ENCODE measurements at regions of chr16 and their contacts with region 1.

Region 1: GRCh38 chr16:74226338-74226954 is 70.2 kb upstream of the PSMD7 start:
- DNase-seq: no peak
- H3K4me3 ChIP-seq: peak overlapping the region in 1 of 4 experiments; percentile 4; a peak in 1 of 8 replicates
- H3K27ac ChIP-seq: no peak overlapping the region
- H3K4me1 ChIP-seq: peaks cover 0 to 4% (median under 1%) of the 10 kb centered on the region in 4 experiments; a peak in 3 of 7 replicates
- H3K27me3 ChIP-seq: no peaks in the 10 kb centered on the region
- CTCF ChIP-seq: peak in 2 of 3 experiments; percentile 24 to 29; a peak in 2 of 4 replicates
- EP300 ChIP-seq: no peak
- POLR2A ChIP-seq: no peak
- RAD21 ChIP-seq: peak; percentile 62 to 68

Region 2: DNA sequence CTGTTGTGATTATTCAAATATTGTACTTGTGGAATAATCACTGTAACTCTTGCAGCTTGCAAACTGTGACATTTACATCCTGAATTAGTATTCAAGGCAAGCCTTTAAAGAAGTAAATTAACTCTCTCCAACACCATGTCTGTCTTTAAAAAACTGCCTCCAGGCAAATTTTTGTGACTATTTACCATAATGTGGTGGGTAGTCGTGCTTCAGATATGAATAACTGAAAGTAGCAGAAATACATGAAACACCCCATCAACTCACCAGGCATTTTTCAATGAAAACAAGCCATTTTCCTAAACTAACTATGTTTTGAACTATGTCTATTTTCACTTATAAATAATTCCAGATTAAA is 147.2 kb before region 1 on chr16:
- CTCF ChIA-PET with region 1: no interaction called
- POLR2A ChIA-PET with region 1: no interaction called
- DNase-seq: no peak
- H3K4me3 ChIP-seq: no peak overlapping the region
- H3K27ac ChIP-seq: no peak overlapping the region
- H3K4me1 ChIP-seq: no peaks in the 10 kb centered on the region
- H3K27me3 ChIP-seq: no peaks in the 10 kb centered on the region
- CTCF ChIP-seq: no peak
- EP300 ChIP-seq: no peak
- POLR2A ChIP-seq: no peak
- RAD21 ChIP-seq: no peak

Region 3: DNA sequence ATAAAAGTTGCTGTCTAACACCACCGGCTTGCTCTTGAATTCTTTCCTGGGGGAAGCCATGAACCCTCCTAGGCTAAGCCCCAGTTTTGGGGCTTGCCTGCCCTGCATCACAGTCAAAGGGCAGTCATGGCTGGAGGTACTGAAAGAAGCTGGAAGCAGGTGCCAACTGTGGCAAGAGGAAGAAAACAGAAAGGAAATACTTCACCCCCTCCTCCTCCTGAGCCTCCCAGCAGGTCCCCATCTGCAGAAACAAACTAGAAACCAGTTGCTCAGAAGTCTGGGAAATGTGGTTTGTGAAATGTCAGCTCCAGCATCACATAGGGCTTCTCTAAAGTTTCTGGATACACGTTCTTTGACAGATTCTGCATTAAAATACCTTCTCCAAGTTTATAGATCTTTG is 79.8 kb before region 1 on chr16:
- CTCF ChIA-PET with region 1: no interaction called
- POLR2A ChIA-PET with region 1: no interaction called
- DNase-seq: no peak
- H3K4me3 ChIP-seq: no peak overlapping the region
- H3K27ac ChIP-seq: no peak overlapping the region
- H3K4me1 ChIP-seq: no peaks in the 10 kb centered on the region
- H3K27me3 ChIP-seq: no peaks in the 10 kb centered on the region
- CTCF ChIP-seq: no peak
- EP300 ChIP-seq: no peak
- POLR2A ChIP-seq: no peak
- RAD21 ChIP-seq: no peak

Region 4: GRCh38 chr16:74216319-74216718 is 10.1 kb before region 1 on chr16:
- CTCF ChIA-PET with region 1: interaction called, 15 read pairs
- POLR2A ChIA-PET with region 1: no interaction called
- DNase-seq: no peak
- H3K4me3 ChIP-seq: no peak overlapping the region
- H3K27ac ChIP-seq: no peak overlapping the region
- H3K4me1 ChIP-seq: no peaks in the 10 kb centered on the region
- H3K27me3 ChIP-seq: no peaks in the 10 kb centered on the region
- CTCF ChIP-seq: no peak
- EP300 ChIP-seq: no peak
- POLR2A ChIP-seq: no peak
- RAD21 ChIP-seq: no peak

Region 5: GRCh38 chr16:74296432-74297144 is 70.1 kb after region 1 on chr16 and contains the start of gene PSMD7:
- CTCF ChIA-PET with region 1: no interaction called
- POLR2A ChIA-PET with region 1: no interaction called
- DNase-seq: peak; percentile 46 to 93
- H3K4me3 ChIP-seq: peak within 1 kb of the TSS; percentile 74 to 96 (median 84)
- H3K27ac ChIP-seq: peak within 1 kb of the TSS; percentile 97
- H3K4me1 ChIP-seq: no peaks in the 10 kb centered on the region; a peak in 1 of 7 replicates
- H3K27me3 ChIP-seq: no peaks in the 10 kb centered on the region; a peak in 1 of 7 replicates
- CTCF ChIP-seq: no peak
- EP300 ChIP-seq: no peak
- POLR2A ChIP-seq: peak; percentile 82 to 92
- RAD21 ChIP-seq: no peak
- total RNA-seq, gene PSMD7: 148 and 153 TPM in 2 replicates

Region 6: DNA sequence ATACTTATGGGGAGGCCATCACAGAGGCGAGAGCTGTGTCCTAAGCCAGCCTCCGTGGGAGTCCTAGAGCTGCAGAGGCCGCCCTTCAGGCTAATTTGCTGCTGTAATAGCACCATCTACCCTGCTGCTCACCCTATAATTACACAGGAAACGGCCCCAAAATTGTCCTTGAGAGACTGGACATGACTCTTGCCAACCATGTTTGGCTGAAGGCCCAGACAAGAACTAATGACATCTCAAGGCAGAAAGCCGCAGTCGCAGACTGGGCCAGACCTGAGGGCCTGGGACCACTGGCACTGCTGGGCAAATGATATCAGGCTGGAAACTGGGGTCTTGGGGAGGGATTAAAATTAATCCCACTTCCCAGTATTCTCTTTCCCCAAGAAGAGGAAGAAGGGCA is 94.3 kb after region 1 on chr16:
- CTCF ChIA-PET with region 1: no interaction called
- POLR2A ChIA-PET with region 1: no interaction called
- DNase-seq: no peak
- H3K4me3 ChIP-seq: no peak overlapping the region
- H3K27ac ChIP-seq: no peak overlapping the region
- H3K4me1 ChIP-seq: no peaks in the 10 kb centered on the region; a peak in 1 of 7 replicates
- H3K27me3 ChIP-seq: no peaks in the 10 kb centered on the region
- CTCF ChIP-seq: no peak
- EP300 ChIP-seq: no peak
- POLR2A ChIP-seq: no peak
- RAD21 ChIP-seq: no peak

Measured in H1 (cell line).